ENCODE measurements at regions of chr16 and their contacts with region 1.

Region 1: DNA sequence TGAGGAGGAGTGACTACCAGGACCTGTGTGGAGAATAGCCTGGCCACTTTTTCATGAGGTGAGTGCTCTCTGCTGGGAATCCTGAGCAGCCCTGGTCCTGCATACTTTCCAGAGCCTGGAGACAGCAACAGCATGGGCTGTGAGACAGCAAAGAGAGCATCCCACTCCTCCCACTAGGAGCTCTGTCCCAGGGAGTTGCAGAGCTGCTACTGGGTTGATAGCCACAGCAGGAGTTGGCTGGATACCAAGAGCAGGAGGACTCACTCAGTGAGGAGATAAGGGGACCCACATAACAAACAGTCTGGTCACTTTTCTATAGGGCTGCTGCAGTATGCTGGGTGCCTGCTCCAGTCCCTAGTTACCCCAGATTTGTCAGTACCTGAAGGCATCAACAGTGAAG is 439.3 kb upstream of the CDH8 start:
- DNase-seq: no peak

Region 2: DNA sequence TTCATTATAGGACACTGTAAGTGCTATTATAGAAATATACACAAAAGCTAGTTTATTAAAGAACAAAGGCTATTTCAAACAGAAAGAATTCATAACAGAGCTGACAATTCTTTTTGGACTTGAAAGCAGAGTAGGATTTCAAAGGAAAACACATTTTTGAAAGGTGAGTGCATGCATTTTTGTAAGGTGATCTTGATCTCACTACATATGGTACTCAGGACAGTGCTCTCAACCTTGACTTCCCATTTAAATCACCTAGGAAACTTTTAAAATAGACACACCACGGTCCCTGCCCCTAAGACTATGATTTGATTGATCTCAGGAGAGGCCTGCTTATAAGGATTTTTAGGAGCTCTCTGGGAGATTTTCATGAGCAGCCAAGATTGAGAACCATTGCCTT is 1801.3 kb before region 1 on chr16:
- intact Hi-C with region 1: loop called (anchors 5 kb)
- DNase-seq: no peak

Region 3: GRCh38 chr16:62288990-62289629 is 186.5 kb before region 1 on chr16:
- intact Hi-C with region 1: no loop called
- DNase-seq: no peak

Region 4: DNA sequence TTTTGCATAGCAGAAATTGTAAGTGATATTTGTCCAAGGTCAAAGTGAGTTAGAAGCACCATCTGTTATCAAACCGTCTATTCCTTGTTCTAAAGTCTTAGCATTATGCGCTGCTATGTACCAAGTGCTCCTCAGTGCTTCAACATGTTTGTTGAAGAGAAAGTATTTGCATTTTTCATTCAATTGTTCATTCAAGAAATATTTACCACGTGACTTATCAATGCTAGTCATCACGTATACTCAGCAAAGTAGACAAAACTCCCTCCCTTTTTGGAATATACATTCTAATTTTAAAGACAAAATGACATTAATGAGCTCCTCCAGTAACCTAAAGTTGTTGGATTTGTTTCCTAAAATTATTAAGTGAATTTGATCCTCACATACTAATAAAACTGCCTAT is 51.4 kb before region 1 on chr16:
- intact Hi-C with region 1: no loop called
- DNase-seq: no peak

Region 5: DNA sequence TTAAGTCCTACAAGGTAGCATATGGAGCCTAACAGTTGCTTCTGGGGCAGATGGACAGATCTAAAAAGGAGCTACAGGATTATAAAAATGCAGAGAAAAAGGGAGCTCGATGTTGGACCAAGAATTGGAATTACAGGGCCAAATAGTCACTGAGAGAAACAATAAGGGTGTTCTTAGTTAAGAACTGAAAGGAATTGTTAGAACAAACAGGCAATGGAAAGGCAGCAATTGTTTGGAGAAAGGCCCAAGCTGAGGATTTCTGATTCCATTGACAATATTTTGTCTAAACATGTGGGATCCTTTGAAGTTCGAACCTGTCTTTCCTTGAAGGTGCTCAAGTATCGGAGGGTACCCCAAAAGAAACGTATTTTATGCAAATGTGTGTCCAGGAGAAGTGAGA is 74.3 kb after region 1 on chr16:
- intact Hi-C with region 1: loop called (anchors 10 kb)
- DNase-seq: no peak

Region 6: DNA sequence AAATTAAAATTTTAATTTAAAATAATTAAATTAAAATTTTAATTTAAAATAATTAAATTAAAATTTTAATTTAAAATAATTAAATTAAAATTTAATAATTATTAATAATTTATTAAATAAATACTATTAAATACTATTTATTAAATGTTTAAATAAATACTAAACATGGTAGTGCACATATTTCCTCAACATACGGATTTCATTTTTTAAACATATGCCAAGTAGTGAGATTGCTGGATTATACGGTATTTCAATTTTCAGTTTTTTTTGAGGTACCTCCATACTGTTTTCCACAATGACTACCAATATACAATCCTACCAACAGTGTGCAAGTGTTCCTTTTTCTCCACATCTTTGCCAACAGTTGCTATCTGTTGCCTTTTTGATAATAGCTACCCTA is 413.5 kb after region 1 on chr16:
- intact Hi-C with region 1: no loop called
- DNase-seq: no peak